PC-9 (cell line): ENCODE measurements at regions of chr12 and their contacts with region 1.

Region 1: GRCh38 chr12:120649442-120650232 is 9.2 kb downstream of the CABP1 start:
- DNase-seq: no peak
- H3K4me3 ChIP-seq: peak overlapping the region; percentile 53; the same call in 1 of the 2 replicates
- H3K27ac ChIP-seq: no peak overlapping the region
- H3K4me1 ChIP-seq: peaks cover 5% of the 10 kb centered on the region; the same call in 1 of the 2 replicates
- H3K27me3 ChIP-seq: peaks cover 4% of the 10 kb centered on the region
- CTCF ChIP-seq: peak; percentile 49; the same call in 1 of the 2 replicates

Region 2: DNA sequence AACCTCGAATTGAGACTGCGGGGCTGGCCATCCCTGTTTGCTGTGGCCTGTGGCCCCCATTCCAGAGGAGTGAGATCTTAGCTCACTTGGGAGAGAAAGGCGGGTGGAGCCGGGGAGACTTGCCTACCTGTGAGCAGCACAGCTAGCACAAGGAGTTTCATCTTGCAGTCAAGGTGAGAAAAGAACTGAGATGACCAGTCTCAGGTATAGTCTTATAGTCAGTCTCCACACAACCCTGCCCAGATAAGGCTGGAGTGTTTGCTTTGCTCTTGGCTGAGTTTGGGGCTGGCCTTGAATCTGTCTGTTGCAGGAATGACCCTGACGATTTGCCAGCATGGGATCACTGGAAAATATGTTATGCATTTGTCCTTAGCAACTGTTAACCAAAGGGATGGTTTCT is 322.0 kb before region 1 on chr12 and contains the start of gene PLA2G1B:
- CTCF ChIA-PET with region 1: no interaction called
- POLR2A ChIA-PET with region 1: no interaction called
- intact Hi-C with region 1: loop called (anchors 2 kb)
- DNase-seq: no peak
- H3K4me3 ChIP-seq: no peak within 1 kb of the TSS
- H3K27ac ChIP-seq: no peak within 1 kb of the TSS
- H3K4me1 ChIP-seq: no peaks in the 10 kb centered on the region
- H3K27me3 ChIP-seq: 0 out of 2 replicates have a peak, but pooled peaks cover 4% of the 10 kb centered on the region
- CTCF ChIP-seq: no peak
- total RNA-seq, gene PLA2G1B: not detected in 2 replicates

Region 3: DNA sequence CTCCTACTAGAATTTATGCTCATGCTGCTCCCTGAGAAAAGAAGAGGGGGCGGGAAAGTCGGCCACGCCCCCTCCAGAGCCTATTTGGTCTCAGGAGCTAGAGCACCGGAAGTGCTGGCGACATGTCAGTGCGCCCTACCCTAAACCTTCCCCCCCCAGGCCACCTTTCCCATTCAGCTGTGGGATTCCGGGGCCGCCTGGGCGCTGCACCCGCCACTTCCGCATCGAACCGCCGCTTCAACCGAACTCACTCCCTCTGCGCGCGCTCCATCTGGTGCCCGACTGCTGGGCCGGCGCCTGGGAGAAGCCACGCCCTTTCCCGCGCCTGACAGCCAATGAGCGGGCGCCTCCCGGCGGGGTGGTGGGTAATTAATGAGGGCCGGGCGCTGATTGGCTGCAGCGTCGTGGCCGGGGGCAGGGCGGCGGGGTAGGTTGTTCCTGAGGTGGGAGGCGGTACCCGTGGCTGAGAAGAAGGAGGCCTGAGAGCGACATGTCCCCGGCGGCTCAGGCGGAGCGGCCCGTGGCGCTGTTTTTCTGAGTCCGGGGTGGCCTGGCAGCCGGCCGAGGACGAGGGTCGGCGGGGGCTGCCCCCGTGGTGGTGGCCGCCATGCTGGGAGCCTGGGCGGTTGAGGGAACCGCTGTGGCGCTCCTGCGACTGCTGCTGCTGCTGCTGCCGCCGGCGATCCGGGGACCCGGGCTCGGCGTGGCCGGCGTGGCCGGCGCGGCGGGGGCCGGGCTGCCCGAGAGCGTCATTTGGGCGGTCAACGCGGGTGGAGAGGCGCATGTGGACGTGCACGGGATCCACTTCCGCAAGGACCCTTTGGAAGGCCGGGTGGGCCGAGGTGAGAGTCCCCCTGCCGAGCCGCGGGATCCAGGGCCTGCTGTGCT is 37.3 kb after region 1 on chr12 and contains the start of gene MLEC:
- CTCF ChIA-PET with region 1: no interaction called
- POLR2A ChIA-PET with region 1: no interaction called
- intact Hi-C with region 1: loop called (anchors 1 kb)
- DNase-seq: peak; percentile 88 to 98
- H3K4me3 ChIP-seq: peak within 1 kb of the TSS; percentile 82
- H3K27ac ChIP-seq: peak within 1 kb of the TSS; percentile 77
- H3K4me1 ChIP-seq: peaks cover 29% of the 10 kb centered on the region
- H3K27me3 ChIP-seq: no peaks in the 10 kb centered on the region
- CTCF ChIP-seq: no peak
- total RNA-seq, gene MLEC: 110 and 131 TPM in 2 replicates

Region 4: DNA sequence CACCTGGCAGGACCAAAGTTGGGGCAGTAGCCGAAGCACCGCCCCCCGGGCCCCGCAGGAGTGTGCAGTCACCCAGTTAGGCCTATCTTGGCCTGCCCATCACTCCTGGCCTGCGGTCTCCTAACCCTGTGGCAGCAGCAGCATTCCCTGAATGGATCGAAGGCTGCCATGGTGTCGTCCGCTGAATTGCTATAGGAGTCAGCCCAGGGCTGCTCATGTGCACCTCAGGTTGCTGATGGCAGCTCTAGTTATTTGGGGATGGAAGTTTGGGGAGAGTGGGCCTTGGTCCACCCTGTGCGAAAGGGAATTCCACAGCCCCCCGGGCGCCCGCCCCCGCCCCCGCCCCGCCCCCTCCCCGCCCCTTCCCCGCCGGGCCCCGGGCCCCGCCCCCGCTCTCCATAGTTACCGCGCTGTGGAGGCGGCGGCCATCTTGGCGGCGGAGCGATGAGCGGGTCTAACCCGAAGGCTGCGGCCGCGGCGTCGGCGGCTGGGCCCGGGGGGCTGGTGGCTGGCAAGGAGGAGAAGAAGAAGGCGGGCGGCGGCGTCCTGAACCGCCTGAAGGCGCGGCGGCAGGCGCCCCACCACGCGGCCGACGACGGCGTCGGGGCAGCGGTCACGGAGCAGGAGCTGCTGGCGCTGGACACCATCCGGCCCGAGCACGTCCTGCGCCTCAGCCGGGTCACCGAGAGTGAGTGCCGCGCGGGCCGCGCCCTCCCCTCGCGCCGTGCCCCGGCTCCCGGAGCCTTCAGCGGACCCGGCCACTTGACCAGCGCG is 60.6 kb after region 1 on chr12 and contains the start of gene UNC119B:
- CTCF ChIA-PET with region 1: no interaction called
- POLR2A ChIA-PET with region 1: no interaction called
- intact Hi-C with region 1: loop called (anchors 1 kb)
- DNase-seq: peak in 1 of 2 experiments; percentile 63
- H3K4me3 ChIP-seq: peak within 1 kb of the TSS; percentile 87
- H3K27ac ChIP-seq: no peak within 1 kb of the TSS; the same call in 1 of the 2 replicates
- H3K4me1 ChIP-seq: peaks cover 7% of the 10 kb centered on the region; the same call in 1 of the 2 replicates
- H3K27me3 ChIP-seq: no peaks in the 10 kb centered on the region
- CTCF ChIP-seq: no peak
- total RNA-seq, gene UNC119B: 25.9 and 30.2 TPM in 2 replicates

Region 5: DNA sequence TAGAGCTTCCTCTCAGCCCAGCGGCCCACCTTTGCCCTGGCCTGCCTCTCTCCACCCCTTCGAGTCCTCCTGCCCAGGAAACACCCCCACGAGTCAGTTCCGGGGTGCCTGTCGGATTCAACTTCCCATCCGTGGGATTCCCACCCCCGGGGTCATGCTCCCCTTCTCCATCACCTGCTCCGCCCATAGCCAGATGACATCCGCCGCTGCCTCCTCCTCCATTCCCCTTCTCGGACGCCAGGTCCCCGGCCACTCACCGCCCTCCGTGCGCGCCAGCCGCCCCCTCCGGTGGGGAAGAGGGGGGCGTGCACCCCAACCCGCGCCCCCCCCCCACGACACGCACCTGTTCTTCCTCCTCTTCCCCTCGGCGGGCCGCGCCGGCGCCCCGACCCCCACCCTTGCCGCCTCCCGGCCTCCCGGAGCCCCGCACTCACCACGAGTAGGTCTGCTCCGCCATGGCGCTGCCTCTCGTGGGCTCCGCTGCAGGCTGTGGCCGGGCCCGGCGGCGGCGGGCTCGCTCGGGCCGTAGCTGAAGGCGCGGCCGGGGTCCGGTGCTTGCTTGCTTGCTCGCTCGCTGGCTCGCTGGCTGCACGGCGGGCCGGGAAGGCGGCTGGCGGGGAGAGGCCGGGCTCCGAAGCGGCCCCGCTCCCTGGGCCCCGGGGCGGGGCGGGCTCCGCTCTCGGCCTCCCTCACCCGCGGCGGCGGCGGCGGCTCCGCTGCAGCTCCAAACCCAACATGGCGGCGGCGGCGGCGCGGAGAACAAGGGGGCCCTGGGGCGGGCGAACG is 254.0 kb after region 1 on chr12:
- CTCF ChIA-PET with region 1: interaction called, 10 read pairs
- POLR2A ChIA-PET with region 1: no interaction called
- intact Hi-C with region 1: no loop called
- DNase-seq: peak; percentile 55 to 74
- H3K4me3 ChIP-seq: peak overlapping the region; percentile 93
- H3K27ac ChIP-seq: no peak overlapping the region
- H3K4me1 ChIP-seq: peaks cover 25% of the 10 kb centered on the region
- H3K27me3 ChIP-seq: no peaks in the 10 kb centered on the region
- CTCF ChIP-seq: no peak

Region 6: GRCh38 chr12:121005346-121005815 is 355.7 kb after region 1 on chr12:
- CTCF ChIA-PET with region 1: interaction called, 6 read pairs
- POLR2A ChIA-PET with region 1: no interaction called
- intact Hi-C with region 1: loop called (anchors 5 kb)
- DNase-seq: peak; percentile 58 to 60
- H3K4me3 ChIP-seq: no peak overlapping the region
- H3K27ac ChIP-seq: no peak overlapping the region
- H3K4me1 ChIP-seq: no peaks in the 10 kb centered on the region
- H3K27me3 ChIP-seq: no peaks in the 10 kb centered on the region
- CTCF ChIP-seq: peak; percentile 75

Region 7: GRCh38 chr12:121438905-121439304 is 789.3 kb after region 1 on chr12:
- CTCF ChIA-PET with region 1: no interaction called
- POLR2A ChIA-PET with region 1: no interaction called
- intact Hi-C with region 1: no loop called
- DNase-seq: no peak
- H3K4me3 ChIP-seq: no peak overlapping the region
- H3K27ac ChIP-seq: no peak overlapping the region
- H3K4me1 ChIP-seq: no peaks in the 10 kb centered on the region
- H3K27me3 ChIP-seq: no peaks in the 10 kb centered on the region
- CTCF ChIP-seq: no peak